PC-3 (cell line): ENCODE measurements at regions of chr2 and their contacts with region 1.

Region 1: DNA sequence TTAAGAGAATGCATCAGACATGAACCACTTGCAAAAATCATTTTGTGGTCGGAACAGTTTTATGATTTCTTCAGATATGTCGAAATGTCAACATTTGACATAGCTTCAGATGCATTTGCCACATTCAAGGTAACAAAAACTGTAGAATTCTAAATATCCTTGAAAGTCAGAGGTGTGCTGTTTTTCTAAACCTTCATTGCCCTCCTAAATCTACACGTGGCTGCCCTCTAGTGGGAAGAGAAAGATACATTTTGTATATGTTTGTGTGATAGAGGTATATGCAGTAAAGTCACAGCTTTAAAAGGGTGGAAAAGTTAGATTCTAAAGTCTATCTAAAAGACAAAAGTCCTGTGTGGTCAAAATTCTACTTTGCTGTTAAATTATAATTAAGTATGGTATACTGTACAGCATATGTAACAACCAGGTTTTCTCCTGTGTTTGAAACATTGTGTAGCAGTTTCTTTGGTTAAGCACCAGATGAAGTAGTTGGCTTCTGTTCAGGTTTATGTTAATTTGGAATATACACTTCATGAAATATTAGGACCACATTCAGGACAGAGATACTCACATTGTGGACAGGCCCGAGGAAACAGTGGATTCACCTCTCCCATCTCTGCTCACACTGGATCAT is 65.9 kb upstream of the ITM2C start:
- DNase-seq: peak; percentile 87
- ATAC-seq: peak; percentile 28
- H3K4me3 ChIP-seq: no peak overlapping the region
- H3K27ac ChIP-seq: peak overlapping the region; percentile 98
- H3K4me1 ChIP-seq: peaks cover 51% of the 10 kb centered on the region
- H3K27me3 ChIP-seq: no peaks in the 10 kb centered on the region
- CTCF ChIP-seq: peak; percentile 77

Region 2: DNA sequence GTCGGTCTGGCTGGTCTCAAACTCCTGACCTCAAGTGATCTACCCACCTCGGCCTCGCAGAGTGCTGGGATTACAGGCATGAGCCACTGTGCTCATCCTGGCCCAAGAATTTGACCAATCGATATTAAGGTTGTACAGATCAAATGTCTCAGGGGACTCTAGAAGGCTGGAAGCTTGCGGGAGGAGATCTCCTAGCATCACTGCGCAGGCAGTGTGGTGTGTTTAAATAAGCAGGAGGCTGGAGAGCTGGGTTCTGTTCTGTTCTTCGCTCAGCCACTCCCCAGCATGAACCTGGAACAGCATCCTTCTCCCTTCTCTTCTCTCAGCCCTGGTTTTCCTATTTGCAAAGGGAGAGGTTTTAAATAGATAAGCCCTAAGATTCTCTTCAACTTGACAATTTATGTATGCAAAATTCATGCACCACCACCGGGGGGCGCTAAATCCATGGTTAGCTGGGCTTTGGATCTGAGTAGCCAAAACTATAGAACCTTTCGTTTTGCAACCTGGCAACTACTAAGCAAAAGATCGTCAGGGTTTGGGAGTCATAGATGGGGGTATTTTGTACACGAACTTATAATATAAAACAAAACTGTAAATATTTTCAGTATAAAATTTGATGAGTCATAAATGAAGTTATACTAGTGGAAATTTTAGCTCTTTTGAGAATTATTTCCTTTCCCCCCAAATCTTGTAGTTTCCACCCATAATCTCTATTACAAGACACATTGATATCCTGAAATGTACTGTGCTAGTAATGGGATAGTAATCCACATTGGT is 790.8 kb before region 1 on chr2:
- CTCF ChIA-PET with region 1: no interaction called
- POLR2A ChIA-PET with region 1: no interaction called
- intact Hi-C with region 1: loop called (anchors 2 kb)
- DNase-seq: peak; percentile 84
- ATAC-seq: peak; percentile 66
- H3K4me3 ChIP-seq: peak overlapping the region; percentile 18; the same call in 1 of the 2 replicates
- H3K27ac ChIP-seq: no peak overlapping the region
- H3K4me1 ChIP-seq: peaks cover 4% of the 10 kb centered on the region; the same call in 1 of the 2 replicates
- H3K27me3 ChIP-seq: no peaks in the 10 kb centered on the region
- CTCF ChIP-seq: peak; percentile 87

Region 3: GRCh38 chr2:230219419-230220331 is 579.2 kb before region 1 on chr2 and contains the start of gene SP110:
- CTCF ChIA-PET with region 1: no interaction called
- POLR2A ChIA-PET with region 1: no interaction called
- intact Hi-C with region 1: loop called (anchors 10 kb)
- DNase-seq: peak; percentile 87
- ATAC-seq: peak; percentile 95
- H3K4me3 ChIP-seq: peak within 1 kb of the TSS; percentile 83
- H3K27ac ChIP-seq: peak within 1 kb of the TSS; percentile 26
- H3K4me1 ChIP-seq: 0 out of 2 replicates have a peak, but pooled peaks cover 9% of the 10 kb centered on the region
- H3K27me3 ChIP-seq: no peaks in the 10 kb centered on the region
- CTCF ChIP-seq: no peak
- total RNA-seq, gene SP110: 3.5 and 6.7 TPM in 2 replicates

Region 4: DNA sequence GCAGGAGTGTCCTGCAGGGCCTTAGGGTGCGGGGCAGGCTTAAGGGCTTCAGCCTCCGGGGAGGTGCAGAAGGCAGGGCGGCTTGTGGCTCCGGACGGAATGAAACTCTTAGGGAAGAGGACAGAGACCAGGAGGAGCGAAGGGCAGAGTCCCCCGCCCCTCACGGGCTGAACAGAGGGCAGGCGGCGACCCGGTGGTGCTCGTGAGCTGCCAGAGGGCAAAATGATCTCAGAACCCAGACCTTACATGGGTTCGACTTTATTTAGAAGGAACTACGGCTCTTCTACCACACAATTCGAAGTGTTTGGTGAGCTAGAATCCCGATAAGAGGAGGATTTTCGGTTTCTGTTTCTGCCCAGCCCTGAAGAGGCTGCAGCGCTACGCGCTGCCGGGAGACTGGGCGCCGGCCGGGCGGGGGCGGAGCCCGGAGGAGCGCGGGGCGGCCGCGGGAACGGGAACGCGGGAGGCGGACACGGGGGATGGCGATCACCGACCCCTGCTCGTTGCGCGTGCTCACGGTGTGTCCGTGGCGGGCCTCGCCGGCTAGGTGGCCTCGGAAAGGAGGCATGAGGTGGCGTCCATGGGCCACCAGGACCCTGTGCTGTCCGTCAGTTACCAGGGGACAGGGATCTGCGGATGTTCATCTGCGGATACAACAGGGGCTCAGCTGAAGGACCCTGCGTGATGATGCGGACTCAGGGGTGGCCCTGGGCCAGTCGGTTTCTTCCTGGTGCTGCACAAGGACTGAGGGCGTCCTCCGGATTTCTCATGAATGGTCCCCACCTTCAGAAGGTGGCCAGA is 387.1 kb before region 1 on chr2:
- CTCF ChIA-PET with region 1: no interaction called
- POLR2A ChIA-PET with region 1: no interaction called
- intact Hi-C with region 1: loop called (anchors 10 kb)
- DNase-seq: peak; percentile 56
- ATAC-seq: peak; percentile 69
- H3K4me3 ChIP-seq: peak overlapping the region; percentile 78
- H3K27ac ChIP-seq: no peak overlapping the region
- H3K4me1 ChIP-seq: peaks cover 19% of the 10 kb centered on the region
- H3K27me3 ChIP-seq: no peaks in the 10 kb centered on the region
- CTCF ChIP-seq: no peak

Region 5: DNA sequence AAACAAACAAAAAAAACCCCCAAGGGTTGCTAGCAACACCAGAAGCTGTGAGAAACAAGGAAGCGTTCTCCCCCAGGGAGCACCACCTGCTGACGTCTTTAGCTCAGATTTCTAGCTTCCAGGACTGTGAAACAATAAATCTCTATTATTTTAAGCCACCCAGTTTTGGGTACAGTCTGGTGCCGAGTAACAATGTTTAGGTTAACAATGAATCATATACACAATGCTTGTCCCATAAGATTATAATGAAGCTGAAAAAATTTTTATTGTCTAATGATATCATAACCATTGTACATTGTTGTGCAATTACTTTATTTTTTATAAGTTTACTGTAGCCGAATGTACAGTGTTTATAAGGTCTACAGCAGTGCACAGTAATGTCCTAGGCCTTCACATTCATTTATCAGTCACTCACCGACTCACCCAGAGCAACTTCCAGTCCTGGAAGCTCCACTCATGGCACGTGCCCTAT is 158.3 kb before region 1 on chr2:
- CTCF ChIA-PET with region 1: no interaction called
- POLR2A ChIA-PET with region 1: interaction called, 6 read pairs
- intact Hi-C with region 1: loop called (anchors 1 kb)
- DNase-seq: peak; percentile 86
- ATAC-seq: peak; percentile 97
- H3K4me3 ChIP-seq: no peak overlapping the region
- H3K27ac ChIP-seq: peak overlapping the region; percentile 79
- H3K4me1 ChIP-seq: peaks cover 13% of the 10 kb centered on the region
- H3K27me3 ChIP-seq: no peaks in the 10 kb centered on the region
- CTCF ChIP-seq: no peak

Region 6: GRCh38 chr2:230737791-230738226 is 61.1 kb before region 1 on chr2:
- CTCF ChIA-PET with region 1: interaction called, 4 read pairs
- POLR2A ChIA-PET with region 1: no interaction called
- intact Hi-C with region 1: loop called (anchors 1 kb)
- DNase-seq: peak; percentile 85
- ATAC-seq: peak; percentile 48
- H3K4me3 ChIP-seq: peak overlapping the region; percentile 53
- H3K27ac ChIP-seq: peak overlapping the region; percentile 95
- H3K4me1 ChIP-seq: peaks cover 60% of the 10 kb centered on the region
- H3K27me3 ChIP-seq: no peaks in the 10 kb centered on the region
- CTCF ChIP-seq: no peak